ENCODE measurements at regions of chr11 and their contacts with region 1.

Region 1: DNA sequence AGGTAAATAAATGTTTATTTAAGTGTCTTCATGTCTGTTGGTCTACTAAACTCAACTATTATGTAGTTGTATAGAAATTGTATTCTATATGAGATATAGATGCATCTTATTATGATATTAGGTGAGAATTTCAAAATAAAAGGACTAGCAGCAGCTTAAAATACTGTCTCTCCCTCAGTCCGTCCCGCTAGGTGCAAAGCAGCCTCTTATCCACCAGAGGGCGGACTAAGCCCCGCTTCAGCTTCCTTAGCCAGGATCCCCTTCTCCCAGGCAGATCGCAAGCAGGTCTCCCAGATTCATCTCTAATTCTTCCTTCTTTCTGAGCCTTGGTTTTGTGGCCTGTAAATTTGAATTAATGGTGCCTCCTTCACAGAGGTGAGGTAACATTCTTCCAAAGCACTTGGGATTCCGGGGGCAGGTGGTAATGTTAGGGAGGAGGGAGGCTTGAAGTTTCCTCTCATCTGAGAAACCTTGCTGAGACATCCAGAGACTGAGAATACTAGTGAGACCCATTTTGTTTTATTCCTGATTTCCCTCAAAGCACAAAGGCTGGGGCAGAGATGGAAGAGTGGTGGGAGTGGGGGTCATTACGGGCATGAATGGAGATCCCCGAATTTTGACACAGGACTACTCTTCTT is 13.5 kb upstream of the INSC start:
- DNase-seq: peak; percentile 49
- H3K4me3 ChIP-seq: no peak overlapping the region
- H3K27ac ChIP-seq: no peak overlapping the region
- H3K4me1 ChIP-seq: peaks cover 33% of the 10 kb centered on the region
- H3K27me3 ChIP-seq: no peaks in the 10 kb centered on the region
- CTCF ChIP-seq: peak; percentile 94 to 96

Region 2: DNA sequence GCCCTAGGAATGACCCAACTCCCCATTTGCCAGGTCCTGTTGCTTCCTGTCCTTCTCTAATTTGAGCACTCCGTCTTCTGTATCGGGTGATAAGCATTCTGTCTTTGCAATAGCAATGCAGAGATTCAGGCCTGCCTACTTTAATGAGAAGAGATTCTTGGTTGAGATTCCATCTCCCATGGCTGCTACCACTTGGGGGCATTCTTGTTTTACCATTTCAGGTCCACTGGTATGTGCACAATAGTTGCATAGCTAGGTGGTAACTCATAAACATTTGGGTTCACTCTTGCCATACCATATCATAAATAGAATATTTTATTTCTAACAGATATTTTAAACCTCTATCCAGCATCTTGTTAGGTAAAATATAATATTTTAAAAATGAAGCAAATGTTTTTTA is 62.2 kb before region 1 on chr11:
- CTCF ChIA-PET with region 1: no interaction called
- dilution Hi-C with region 1: no loop called
- in situ Hi-C with region 1: no loop called
- intact Hi-C with region 1: loop called (anchors 1 kb)
- DNase-seq: peak; percentile 24
- H3K4me3 ChIP-seq: no peak overlapping the region
- H3K27ac ChIP-seq: no peak overlapping the region
- H3K4me1 ChIP-seq: no peaks in the 10 kb centered on the region
- H3K27me3 ChIP-seq: no peaks in the 10 kb centered on the region
- CTCF ChIP-seq: peak; percentile 38 to 63

Region 3: GRCh38 chr11:15113381-15113780 is 12.2 kb after region 1 on chr11:
- CTCF ChIA-PET with region 1: no interaction called
- dilution Hi-C with region 1: no loop called
- in situ Hi-C with region 1: no loop called
- intact Hi-C with region 1: no loop called
- DNase-seq: no peak
- H3K4me3 ChIP-seq: no peak overlapping the region
- H3K27ac ChIP-seq: no peak overlapping the region
- H3K4me1 ChIP-seq: peaks cover 3% of the 10 kb centered on the region
- H3K27me3 ChIP-seq: no peaks in the 10 kb centered on the region
- CTCF ChIP-seq: no peak

Region 4: GRCh38 chr11:15159085-15159484 is 57.9 kb after region 1 on chr11:
- CTCF ChIA-PET with region 1: interaction called, 4 read pairs
- dilution Hi-C with region 1: no loop called
- in situ Hi-C with region 1: loop called (anchors 5 kb)
- intact Hi-C with region 1: loop called (anchors 1 kb)
- DNase-seq: peak; percentile 39
- H3K4me3 ChIP-seq: no peak overlapping the region
- H3K27ac ChIP-seq: no peak overlapping the region
- H3K4me1 ChIP-seq: peaks cover 19% of the 10 kb centered on the region
- H3K27me3 ChIP-seq: no peaks in the 10 kb centered on the region
- CTCF ChIP-seq: peak; percentile 76 to 81

Region 5: DNA sequence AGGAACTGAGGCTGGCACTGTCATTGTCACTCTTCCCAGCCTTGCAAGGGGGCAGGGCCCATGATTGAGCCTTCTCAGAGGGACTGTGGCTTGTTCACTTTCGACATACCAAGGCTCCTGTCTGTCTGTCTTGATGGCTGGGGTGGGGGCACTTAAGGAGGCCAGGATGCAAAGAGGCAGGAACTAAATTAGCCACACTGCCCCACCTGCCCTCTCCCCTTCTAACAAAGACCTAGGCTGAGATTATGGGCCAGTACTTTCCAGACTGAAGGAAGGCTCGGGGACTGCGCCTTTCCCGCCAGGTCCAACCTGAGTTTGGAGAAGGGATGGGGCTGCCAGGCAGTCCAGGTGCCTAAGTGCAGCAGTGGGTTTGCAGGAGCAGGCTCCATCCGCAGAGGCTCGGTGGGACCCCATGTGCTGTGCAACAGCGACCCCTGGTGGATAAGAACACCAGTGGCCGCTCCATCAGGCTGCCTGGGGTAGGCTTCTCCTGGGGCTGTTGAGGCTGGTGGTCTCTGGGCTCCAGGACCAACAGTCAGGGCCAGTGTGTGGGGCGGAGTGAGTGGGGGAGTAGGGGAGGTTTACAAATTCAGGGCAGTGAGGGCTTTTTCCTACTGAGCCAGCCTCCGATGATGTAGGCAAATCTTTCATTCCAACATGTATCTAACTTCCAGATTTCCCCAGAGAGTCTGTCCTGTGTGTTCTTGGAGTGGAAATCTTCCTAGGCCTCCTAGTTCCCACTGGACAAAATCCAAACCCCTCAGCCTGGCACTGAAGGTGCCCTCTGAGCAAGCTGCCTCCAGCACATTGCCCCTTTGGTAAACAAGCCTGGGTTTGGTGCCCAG is 107.4 kb after region 1 on chr11:
- CTCF ChIA-PET with region 1: interaction called, 4 read pairs
- dilution Hi-C with region 1: no loop called
- in situ Hi-C with region 1: loop called (anchors 5 to 10 kb)
- intact Hi-C with region 1: loop called (anchors 1 kb)
- DNase-seq: peak; percentile 27
- H3K4me3 ChIP-seq: no peak overlapping the region
- H3K27ac ChIP-seq: no peak overlapping the region
- H3K4me1 ChIP-seq: no peaks in the 10 kb centered on the region
- H3K27me3 ChIP-seq: no peaks in the 10 kb centered on the region
- CTCF ChIP-seq: peak; percentile 80 to 94

Region 6: DNA sequence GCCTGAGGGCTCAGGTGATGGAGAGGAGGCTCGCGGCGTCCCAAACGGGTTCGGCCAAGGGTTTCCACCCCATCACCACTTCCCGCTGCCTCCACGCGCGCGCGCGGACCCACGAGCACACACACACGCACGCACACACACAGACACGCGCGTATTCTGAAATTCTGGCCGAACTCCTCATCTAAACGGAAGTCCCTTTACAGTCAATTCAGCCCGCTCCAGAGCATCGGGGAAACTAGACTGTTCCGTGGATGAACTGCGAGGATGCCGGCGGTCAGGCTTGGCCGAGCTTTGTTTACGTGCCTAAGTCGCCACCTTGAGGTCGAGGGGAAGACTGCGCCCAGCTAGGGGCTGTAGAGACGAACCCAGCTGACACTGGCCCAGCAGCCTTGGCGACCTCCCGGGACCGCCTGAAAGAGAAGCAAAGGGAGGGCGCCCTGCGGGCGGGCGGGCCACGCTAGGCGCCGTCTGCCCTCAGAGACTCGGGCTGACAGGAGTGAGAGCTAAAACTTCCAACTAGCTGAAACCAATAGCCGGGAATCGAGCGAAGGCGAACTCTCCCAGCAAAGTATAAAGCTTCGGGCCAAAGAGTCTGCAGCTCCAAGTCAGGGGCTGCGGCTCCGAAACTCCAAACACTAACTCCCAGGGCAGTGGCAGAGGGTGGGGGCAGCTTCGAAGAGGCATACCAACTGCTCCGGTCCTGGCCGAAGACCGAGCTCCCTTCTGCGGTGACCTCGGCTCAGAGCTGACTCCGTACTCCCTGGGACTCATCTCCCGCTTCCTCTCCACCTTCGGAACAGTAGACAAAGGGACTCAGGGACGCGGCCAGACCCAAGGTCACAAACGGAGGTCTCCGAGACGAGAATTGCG is 1512.6 kb after region 1 on chr11:
- CTCF ChIA-PET with region 1: no interaction called
- dilution Hi-C with region 1: no loop called
- in situ Hi-C with region 1: no loop called
- intact Hi-C with region 1: loop called (anchors 10 kb)
- DNase-seq: peak; percentile 72
- H3K4me3 ChIP-seq: peak overlapping the region; percentile 42 to 51 (median 49)
- H3K27ac ChIP-seq: no peak overlapping the region
- H3K4me1 ChIP-seq: peaks cover 12% of the 10 kb centered on the region
- H3K27me3 ChIP-seq: peaks cover 44% of the 10 kb centered on the region
- CTCF ChIP-seq: peak; percentile 88 to 90